CD4-positive, alpha-beta memory T cell (primary cell): ENCODE measurements at regions of chr2 and their contacts with region 1.

Region 1: DNA sequence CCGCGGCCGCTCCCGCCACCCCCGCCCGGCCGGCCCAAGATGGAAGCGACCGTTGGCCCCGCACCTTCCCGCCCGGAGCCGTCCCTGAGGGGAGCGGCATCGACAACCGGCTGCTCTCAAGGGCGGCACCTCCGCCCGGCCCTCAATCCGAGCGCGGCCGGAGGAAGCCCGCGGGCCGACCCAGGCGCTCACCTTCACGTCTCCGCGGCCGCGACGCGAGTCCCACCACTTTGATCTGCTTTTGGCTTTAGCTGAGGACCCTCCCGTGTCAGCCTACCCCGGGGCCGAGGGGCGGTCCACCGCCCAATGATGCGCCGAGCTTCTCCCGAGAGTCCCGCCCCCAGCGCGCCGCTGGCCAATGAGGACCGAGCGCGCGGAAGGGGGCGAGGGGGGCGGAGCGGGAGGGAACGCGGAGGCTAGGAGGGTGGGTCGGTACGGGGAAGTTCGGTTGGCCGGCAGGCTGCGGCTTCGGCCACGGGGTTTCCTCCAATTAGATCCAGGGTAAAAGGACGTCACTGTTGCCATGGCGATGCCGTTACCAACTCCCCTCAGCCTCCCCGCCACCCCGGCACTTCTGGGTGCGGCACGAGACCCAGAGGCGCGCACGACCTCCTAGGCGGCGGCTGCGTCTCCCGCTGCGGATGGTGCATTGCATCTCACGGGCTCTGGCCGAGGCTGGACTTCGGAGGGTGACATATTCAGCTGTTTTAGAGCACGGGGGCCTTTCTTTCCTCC is at the start of gene YWHAQ:
- DNase-seq: peak; percentile 97 to 98 (median 97)
- H3K4me3 ChIP-seq: peak within 1 kb of the TSS; percentile 45 to 86
- H3K4me3 Mint-ChIP-seq: peak within 1 kb of the TSS; percentile 94 to 98 (median 96)
- H3K27ac ChIP-seq: peak within 1 kb of the TSS; percentile 86
- H3K27ac Mint-ChIP-seq: peak within 1 kb of the TSS; percentile 96 to 98 (median 98)
- H3K4me1 ChIP-seq: peaks cover 46% of the 10 kb centered on the region
- H3K4me1 Mint-ChIP-seq: peaks cover 37 to 58% (median 46%) of the 10 kb centered on the region in 4 donors
- H3K27me3 ChIP-seq: no peaks in the 10 kb centered on the region
- H3K27me3 Mint-ChIP-seq: no peaks in the 10 kb centered on the region
- total RNA-seq, gene YWHAQ: 124 TPM

Region 2: DNA sequence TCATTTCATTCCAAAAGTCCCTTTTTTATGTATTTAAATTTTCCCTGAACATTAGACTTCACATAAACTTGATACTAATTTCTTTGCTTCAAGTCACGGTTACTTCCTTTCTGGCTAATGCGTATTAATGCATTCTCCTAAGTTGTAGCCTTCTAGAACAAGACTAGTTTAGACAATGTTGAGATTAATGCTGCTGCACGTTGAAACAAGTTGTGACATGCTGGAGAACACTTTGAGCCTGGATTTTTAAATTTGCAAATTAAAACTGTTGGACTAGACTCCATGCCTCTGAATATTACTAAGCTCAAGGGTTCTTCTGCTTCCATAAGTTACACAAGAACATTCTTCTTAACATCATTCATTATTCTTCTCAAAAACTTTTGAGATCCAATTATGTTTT is 920.0 kb before region 1 on chr2:
- CTCF ChIA-PET with region 1: no interaction called
- POLR2A ChIA-PET with region 1: no interaction called
- intact Hi-C with region 1: no loop called
- DNase-seq: no peak
- H3K4me3 ChIP-seq: no peak overlapping the region
- H3K4me3 Mint-ChIP-seq: no peak overlapping the region
- H3K27ac ChIP-seq: no peak overlapping the region
- H3K27ac Mint-ChIP-seq: no peak overlapping the region
- H3K4me1 ChIP-seq: no peaks in the 10 kb centered on the region
- H3K4me1 Mint-ChIP-seq: no peaks in the 10 kb centered on the region
- H3K27me3 ChIP-seq: no peaks in the 10 kb centered on the region
- H3K27me3 Mint-ChIP-seq: peaks cover 8 to 9% of the 10 kb centered on the region in 2 donors

Region 3: DNA sequence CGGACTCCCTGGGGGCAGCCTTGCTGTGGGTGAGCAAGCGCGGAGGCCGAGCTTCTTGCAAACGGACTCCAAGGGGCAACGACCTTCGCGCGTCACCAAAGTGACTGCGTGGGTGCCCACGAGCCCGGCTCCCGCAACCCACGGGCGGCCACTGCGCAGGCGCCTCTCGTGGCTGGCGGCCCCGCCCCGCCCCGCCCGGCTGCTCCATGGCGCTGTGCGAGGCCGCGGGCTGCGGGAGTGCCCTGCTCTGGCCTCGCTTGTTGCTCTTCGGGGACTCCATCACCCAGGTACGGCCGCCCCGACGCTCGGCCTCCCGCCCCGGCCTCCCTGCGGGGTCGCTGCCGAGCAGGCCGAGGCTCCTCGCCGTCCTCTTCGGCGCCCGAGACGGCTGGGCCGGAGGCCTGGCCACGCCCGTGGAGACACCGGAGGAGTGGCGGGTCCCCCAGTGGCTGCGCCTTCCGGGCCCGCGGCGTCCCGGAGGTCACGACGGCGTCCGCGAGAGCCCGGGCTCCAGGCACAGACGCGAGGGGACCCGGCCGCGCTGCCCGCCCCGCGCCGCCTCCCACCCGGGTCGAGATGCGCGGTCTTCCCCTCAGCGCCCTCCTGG is 156.5 kb before region 1 on chr2 and contains the start of gene IAH1:
- CTCF ChIA-PET with region 1: no interaction called
- POLR2A ChIA-PET with region 1: interaction called, 12 read pairs
- intact Hi-C with region 1: loop called (anchors 2 kb)
- DNase-seq: peak; percentile 78 to 82 (median 80)
- H3K4me3 ChIP-seq: peak within 1 kb of the TSS; percentile 11 to 86
- H3K4me3 Mint-ChIP-seq: peak within 1 kb of the TSS; percentile 83 to 91 (median 86)
- H3K27ac ChIP-seq: peak within 1 kb of the TSS; percentile 83
- H3K27ac Mint-ChIP-seq: peak within 1 kb of the TSS; percentile 80 to 95 (median 94)
- H3K4me1 ChIP-seq: peaks cover 52% of the 10 kb centered on the region
- H3K4me1 Mint-ChIP-seq: peaks cover 28 to 59% (median 45%) of the 10 kb centered on the region in 4 donors
- H3K27me3 ChIP-seq: no peaks in the 10 kb centered on the region
- H3K27me3 Mint-ChIP-seq: no peaks in the 10 kb centered on the region
- total RNA-seq, gene IAH1: 52.5 to 58.1 TPM

Region 4: GRCh38 chr2:9618410-9618809 is 12.5 kb before region 1 on chr2:
- CTCF ChIA-PET with region 1: interaction called, 6 read pairs
- POLR2A ChIA-PET with region 1: interaction called, 87 read pairs
- intact Hi-C with region 1: loop called (anchors 1 kb)
- DNase-seq: peak; percentile 30 to 62 (median 40)
- H3K4me3 ChIP-seq: no peak overlapping the region
- H3K4me3 Mint-ChIP-seq: peak overlapping the region; percentile 75 to 90 (median 84)
- H3K27ac ChIP-seq: peak overlapping the region; percentile 56
- H3K27ac Mint-ChIP-seq: peak overlapping the region; percentile 80 to 96 (median 94)
- H3K4me1 ChIP-seq: peaks cover 82% of the 10 kb centered on the region
- H3K4me1 Mint-ChIP-seq: peaks cover 74 to 99% (median 87%) of the 10 kb centered on the region in 4 donors
- H3K27me3 ChIP-seq: no peaks in the 10 kb centered on the region
- H3K27me3 Mint-ChIP-seq: no peaks in the 10 kb centered on the region

Region 5: DNA sequence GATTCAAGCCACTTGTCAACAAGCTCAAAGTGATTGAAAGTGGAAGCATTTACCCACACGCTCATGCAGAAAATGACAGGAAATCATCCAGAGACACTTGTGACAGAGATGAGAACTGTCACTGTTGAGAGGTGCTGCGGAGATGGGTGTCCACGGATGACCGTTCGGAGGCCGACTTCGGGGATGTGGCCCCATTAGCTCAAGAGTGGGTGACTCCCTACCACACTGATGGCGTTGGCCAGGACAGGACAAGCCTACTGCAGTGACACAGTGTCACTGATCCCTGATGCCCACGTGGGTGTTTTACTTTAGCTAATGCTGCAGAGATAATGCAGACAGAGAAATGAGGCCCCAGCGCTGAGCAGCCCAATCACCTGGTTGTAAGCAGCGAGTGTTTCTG is 81.3 kb after region 1 on chr2:
- CTCF ChIA-PET with region 1: no interaction called
- POLR2A ChIA-PET with region 1: interaction called, 14 read pairs
- intact Hi-C with region 1: no loop called
- DNase-seq: peak in 2 of 5 donors; percentile 21 to 25
- H3K4me3 ChIP-seq: peak overlapping the region in 1 of 2 donors; percentile 42
- H3K4me3 Mint-ChIP-seq: peak overlapping the region; percentile 60 to 86 (median 82)
- H3K27ac ChIP-seq: peak overlapping the region; percentile 61
- H3K27ac Mint-ChIP-seq: peak overlapping the region; percentile 63 to 95 (median 88)
- H3K4me1 ChIP-seq: peaks cover 49% of the 10 kb centered on the region
- H3K4me1 Mint-ChIP-seq: peaks cover 21 to 49% (median 38%) of the 10 kb centered on the region in 4 donors
- H3K27me3 ChIP-seq: no peaks in the 10 kb centered on the region
- H3K27me3 Mint-ChIP-seq: no peaks in the 10 kb centered on the region

Region 6: DNA sequence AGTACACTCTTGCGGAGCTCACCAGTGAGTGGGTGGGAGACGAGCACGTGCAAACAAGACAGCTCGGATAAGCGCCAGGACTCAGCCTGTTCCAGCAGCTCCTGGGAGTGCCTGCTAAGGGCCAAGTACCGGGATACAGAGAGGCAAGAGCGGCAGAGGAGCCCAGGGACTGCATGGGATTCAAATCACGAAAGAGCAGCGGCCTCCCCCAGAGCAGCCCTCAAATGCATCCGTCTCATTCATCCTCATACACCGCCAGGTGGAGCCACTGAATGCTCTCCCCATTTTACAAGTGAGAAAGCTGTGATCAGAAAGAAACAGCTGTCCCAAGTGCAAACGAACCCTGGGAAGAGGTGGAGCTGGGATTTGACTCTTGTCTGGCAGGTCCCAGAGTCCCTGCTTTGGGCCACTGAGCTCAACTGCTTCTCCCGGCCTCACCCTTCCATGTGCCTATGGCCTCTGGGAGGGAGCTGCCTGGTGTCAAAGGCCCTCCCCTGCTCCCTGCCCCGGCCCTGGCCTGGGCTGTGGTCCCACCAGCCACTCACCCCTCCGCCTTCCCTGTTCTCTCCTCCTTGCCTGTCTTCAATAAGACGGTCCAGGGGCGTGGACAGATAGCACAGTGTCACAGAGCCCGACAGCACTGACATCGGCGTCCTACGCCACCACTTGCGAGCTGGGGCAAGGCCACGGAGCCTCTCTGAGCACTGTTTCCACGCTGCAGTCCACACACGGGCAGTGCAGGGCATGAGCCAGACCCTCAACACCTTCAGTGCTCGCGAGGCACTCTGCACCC is 139.6 kb after region 1 on chr2:
- CTCF ChIA-PET with region 1: interaction called, 5 read pairs
- POLR2A ChIA-PET with region 1: interaction called, 12 read pairs
- intact Hi-C with region 1: no loop called
- DNase-seq: peak; percentile 49 to 63 (median 58)
- H3K4me3 ChIP-seq: no peak overlapping the region
- H3K4me3 Mint-ChIP-seq: peak overlapping the region in 1 of 8 donors; percentile 55
- H3K27ac ChIP-seq: no peak overlapping the region
- H3K27ac Mint-ChIP-seq: peak overlapping the region in 5 of 7 donors; percentile 15 to 88 (median 46)
- H3K4me1 ChIP-seq: peaks cover 20% of the 10 kb centered on the region
- H3K4me1 Mint-ChIP-seq: peaks cover 3 to 21% (median 13%) of the 10 kb centered on the region in 4 donors
- H3K27me3 ChIP-seq: no peaks in the 10 kb centered on the region
- H3K27me3 Mint-ChIP-seq: no peaks in the 10 kb centered on the region

Region 7: GRCh38 chr2:10043906-10044601 is 413.1 kb after region 1 on chr2:
- CTCF ChIA-PET with region 1: no interaction called
- POLR2A ChIA-PET with region 1: no interaction called
- intact Hi-C with region 1: loop called (anchors 2 kb)
- DNase-seq: peak; percentile 92 to 97 (median 95)
- H3K4me3 ChIP-seq: peak overlapping the region in 1 of 2 donors; percentile 43
- H3K4me3 Mint-ChIP-seq: peak overlapping the region; percentile 69 to 86 (median 84)
- H3K27ac ChIP-seq: peak overlapping the region; percentile 66
- H3K27ac Mint-ChIP-seq: peak overlapping the region; percentile 90 to 99 (median 98)
- H3K4me1 ChIP-seq: peaks cover 21% of the 10 kb centered on the region
- H3K4me1 Mint-ChIP-seq: peaks cover 18 to 45% (median 27%) of the 10 kb centered on the region in 4 donors
- H3K27me3 ChIP-seq: no peaks in the 10 kb centered on the region
- H3K27me3 Mint-ChIP-seq: no peaks in the 10 kb centered on the region